ENCODE measurements at regions of chr13 and their contacts with region 1.

Region 1: DNA sequence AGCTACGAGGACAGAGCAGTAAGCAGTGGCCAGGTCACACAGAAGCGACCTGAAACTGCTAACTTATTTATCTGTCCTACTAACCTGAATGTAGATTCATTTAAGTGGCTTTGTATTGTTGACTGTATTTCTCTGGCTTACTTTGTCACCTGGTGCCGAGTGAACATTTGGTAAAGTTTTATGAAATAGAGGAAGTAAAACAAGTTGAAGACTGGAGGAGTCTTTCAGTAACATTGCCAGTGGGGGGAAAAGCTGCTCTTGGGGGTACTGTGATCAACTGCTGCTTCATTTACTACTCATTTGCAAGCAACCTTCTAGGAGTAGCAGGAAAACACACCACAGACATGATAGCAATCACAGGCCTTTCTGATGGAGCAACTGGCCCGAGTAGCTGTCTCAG is 615.0 kb downstream of the FGF9 start:
- DNase-seq: no peak
- H3K4me3 ChIP-seq: no peak overlapping the region
- H3K27ac ChIP-seq: peak overlapping the region in 1 of 2 donors; percentile 39
- H3K4me1 ChIP-seq: peaks cover 0 to 2% of the 10 kb centered on the region in 2 donors
- H3K27me3 ChIP-seq: no peaks in the 10 kb centered on the region
- CTCF ChIP-seq: no peak

Region 2: DNA sequence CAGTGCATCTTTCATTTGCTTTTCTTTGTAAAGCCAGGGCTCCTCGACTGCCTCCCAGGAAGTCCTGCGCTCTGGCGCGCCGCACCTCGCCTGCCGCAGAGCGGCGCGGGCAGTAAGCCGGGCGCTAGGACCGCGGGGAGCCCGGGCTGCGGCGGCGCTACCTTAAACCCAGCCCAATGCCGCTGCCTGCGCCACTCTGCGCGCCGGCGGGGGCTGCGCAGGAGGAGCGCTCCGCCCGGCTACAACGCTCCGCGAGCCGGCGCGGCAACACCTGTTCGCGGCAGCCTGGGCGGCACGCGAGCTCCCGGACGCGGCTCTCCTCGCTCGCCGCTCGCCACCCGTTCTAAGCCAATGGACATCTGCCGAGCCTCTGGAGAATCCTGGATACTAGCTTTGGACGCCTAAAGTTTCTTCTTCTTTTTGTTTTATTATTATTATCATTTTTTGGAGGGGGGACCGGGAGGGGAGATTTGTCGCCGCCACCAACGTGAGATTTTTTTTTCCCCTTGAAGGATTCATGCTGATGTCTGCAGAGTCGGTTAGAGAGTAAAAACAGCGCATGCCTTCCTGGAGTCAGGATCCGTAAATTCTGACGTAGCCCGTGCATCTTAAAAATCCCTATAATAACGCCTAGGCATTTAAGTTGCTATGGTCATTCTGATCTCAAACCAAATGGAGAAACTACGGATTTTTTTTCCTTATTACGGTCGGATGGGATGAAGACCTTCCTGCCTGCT is 614.8 kb before region 1 on chr13 and contains the start of gene FGF9:
- intact Hi-C with region 1: loop called (anchors 10 kb)
- DNase-seq: peak in 1 of 2 donors; percentile 84
- H3K4me3 ChIP-seq: peak within 1 kb of the TSS; percentile 67 to 83
- H3K27ac ChIP-seq: peak within 1 kb of the TSS in 1 of 2 donors; percentile 39
- H3K4me1 ChIP-seq: peaks cover 12 to 41% of the 10 kb centered on the region in 2 donors
- H3K27me3 ChIP-seq: peaks cover 5% of the 10 kb centered on the region
- CTCF ChIP-seq: no peak
- total RNA-seq, gene FGF9: not detected

Region 3: DNA sequence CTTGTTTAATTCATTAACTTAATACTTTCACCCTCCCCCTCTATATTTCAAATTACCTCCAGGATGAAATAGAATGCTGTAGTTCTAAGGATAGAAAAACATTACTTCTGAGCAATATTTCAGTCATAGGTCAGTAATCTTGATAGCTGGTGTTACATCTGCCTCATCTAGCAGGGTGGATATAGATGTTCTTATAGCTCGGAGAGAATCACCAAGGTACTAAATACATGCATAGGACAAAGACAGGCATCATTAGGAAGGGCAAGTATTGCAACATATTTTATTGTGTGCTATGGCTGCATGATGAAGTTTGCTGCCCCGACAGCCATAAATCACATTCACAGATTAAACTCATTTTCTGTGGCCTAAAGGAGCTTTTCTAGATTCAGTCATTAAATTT is 14.0 kb before region 1 on chr13:
- intact Hi-C with region 1: no loop called
- DNase-seq: no peak
- H3K4me3 ChIP-seq: no peak overlapping the region
- H3K27ac ChIP-seq: no peak overlapping the region
- H3K4me1 ChIP-seq: no peaks in the 10 kb centered on the region
- H3K27me3 ChIP-seq: no peaks in the 10 kb centered on the region
- CTCF ChIP-seq: no peak

Measured in ascending aorta (tissue), 2 donors.